Activated CD4-positive, alpha-beta T cell treated with anti-CD3 and anti-CD28 coated beads, Interleukin-2, amount 10 ng/mL, durations not matched to agents 24 days and 14 days (primary cell): ENCODE measurements at regions of chr5 and their contacts with region 1.

Region 1: GRCh38 chr5:180670586-180671359 is 21.4 kb upstream of the FLT4 start:
- DNase-seq: peak; percentile 80
- H3K4me3 Mint-ChIP-seq: no peak overlapping the region
- H3K27ac Mint-ChIP-seq: no peak overlapping the region
- H3K4me1 Mint-ChIP-seq: peaks cover 5% of the 10 kb centered on the region
- H3K27me3 Mint-ChIP-seq: peaks cover 24% of the 10 kb centered on the region

Region 2: DNA sequence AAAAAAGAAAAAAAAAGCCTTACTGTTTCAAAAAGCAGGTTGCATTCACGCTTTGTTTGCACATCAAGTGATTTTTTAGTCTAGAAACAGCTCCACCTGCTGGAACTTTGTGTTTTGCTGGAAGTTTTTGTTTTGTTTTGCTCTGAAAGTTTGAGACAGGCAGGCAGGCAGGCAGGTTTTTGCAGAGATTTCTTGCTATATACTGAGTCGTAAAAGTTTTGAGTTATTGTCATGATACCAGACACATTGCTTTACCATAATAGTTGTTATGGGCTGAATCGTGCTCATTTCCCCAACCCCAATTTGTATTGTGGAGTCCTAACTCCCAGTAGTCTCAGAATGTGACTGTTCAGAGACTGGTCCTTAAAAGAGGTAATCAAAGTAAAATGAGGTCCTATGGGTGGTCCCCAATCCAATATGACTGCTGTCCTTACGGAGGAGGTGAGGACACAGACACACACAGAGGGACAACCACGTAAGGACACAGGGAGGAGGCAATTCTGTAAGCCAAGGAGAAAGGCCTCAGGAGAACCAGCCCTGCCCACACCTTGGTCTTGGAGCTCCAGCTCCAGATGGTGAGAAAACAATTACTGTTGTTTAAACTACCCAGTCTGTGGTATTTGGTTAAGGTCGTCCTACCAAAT is 48.2 kb after region 1 on chr5:
- intact Hi-C with region 1: loop called (anchors 5 kb)
- DNase-seq: peak; percentile 81
- H3K4me3 Mint-ChIP-seq: no peak overlapping the region
- H3K27ac Mint-ChIP-seq: no peak overlapping the region
- H3K4me1 Mint-ChIP-seq: peaks cover 13% of the 10 kb centered on the region
- H3K27me3 Mint-ChIP-seq: peaks cover 20% of the 10 kb centered on the region

Region 3: DNA sequence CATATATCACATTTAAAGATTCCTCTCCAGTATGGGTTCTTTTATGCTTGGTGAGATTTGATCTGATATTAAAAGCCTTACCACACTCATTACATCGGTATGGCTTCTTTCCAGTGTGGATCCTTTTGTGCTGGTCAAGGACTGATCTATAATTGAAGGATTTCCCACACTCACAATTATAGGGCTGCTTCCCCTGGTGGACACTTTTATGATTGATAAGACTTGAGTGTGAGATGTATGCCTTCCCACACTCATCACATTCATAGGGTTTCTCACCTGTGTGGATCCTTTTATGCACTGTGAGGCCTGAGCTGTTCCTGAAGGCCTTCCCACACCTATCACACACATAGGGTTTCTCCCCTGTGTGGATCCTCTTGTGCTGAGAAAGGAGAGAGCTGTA is 178.1 kb after region 1 on chr5:
- intact Hi-C with region 1: no loop called
- DNase-seq: no peak
- H3K4me3 Mint-ChIP-seq: no peak overlapping the region
- H3K27ac Mint-ChIP-seq: no peak overlapping the region
- H3K4me1 Mint-ChIP-seq: no peaks in the 10 kb centered on the region
- H3K27me3 Mint-ChIP-seq: no peaks in the 10 kb centered on the region

Region 4: DNA sequence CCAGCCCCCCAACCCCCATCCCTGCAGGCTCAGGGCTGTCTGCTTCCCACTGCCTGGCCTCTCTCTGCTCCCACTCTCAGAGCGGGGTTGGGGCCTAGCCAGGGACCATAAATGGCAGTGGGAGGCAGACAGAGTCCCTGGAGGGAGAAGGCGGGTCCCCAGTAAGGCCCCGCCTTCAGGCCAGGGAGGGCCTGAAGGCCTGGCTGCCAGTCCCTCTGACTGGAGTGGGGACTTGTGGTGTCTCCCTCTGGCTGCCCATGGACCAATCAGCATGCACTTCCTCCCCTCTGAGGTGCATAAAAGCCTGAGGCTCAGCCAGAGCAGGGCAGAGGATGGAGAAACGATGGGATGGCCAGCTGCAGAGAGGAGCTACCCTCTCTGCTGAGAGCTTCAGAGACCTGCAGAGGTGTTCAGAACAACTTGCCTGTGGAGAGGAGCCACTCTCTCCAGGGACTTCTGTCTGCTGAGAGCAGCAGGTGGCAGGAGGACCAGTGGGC is 366.6 kb after region 1 on chr5:
- intact Hi-C with region 1: no loop called
- DNase-seq: no peak
- H3K4me3 Mint-ChIP-seq: no peak overlapping the region
- H3K27ac Mint-ChIP-seq: no peak overlapping the region
- H3K4me1 Mint-ChIP-seq: no peaks in the 10 kb centered on the region
- H3K27me3 Mint-ChIP-seq: peaks cover 12% of the 10 kb centered on the region